HAP-1 (cell line): ENCODE measurements at regions of chr7 and their contacts with region 1.

Region 1: DNA sequence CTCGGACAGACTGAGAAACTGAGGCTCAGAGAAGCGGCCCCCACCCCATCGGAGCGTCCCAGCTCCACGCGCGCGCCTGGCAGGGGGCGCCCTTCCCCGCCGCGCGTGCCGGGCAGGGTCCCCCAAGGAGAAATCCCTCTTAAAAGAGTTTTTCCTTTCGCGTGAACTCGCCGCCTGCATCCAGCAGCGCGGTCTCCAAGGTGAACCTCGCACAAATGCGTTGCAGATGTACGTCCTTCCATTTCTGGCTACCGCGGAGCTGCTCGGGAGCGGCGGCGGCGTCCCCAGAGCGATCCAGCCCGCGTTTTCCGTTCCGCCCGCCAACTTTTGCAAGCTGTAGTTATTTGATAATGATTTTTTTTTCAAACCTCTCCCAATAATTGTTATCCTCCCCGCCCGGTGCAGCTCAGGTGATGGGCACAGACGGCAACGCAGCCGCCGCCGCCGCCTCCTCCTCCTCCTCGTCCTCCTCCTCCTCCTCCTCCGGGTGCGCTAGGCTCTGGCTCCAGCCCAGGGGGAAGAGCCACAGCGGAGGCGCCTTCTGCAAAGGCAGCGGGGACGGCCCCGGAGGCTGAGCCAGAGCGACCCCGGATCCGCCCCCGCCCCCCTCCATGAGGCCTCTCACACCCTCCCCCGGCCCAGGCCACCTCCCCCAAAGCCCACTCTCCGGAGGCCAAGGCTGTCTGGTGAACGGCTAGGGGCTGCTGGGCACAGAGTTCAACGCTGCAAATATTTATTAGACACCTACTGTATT is 74.0 kb upstream of the CUX1 start:
- DNase-seq: peak; percentile 58 to 83
- H3K4me3 ChIP-seq: peak overlapping the region; percentile 46
- H3K4me1 ChIP-seq: peaks cover 3% of the 10 kb centered on the region; the same call in 1 of the 2 replicates
- H3K27me3 ChIP-seq: no peaks in the 10 kb centered on the region

Region 2: GRCh38 chr7:101814991-101815834 is 71.8 kb after region 1 on chr7:
- in situ Hi-C with region 1: loop called (anchors 5 kb)
- DNase-seq: peak; percentile 27 to 74
- H3K4me3 ChIP-seq: peak overlapping the region; percentile 65
- H3K4me1 ChIP-seq: peaks cover 41% of the 10 kb centered on the region
- H3K27me3 ChIP-seq: no peaks in the 10 kb centered on the region

Region 3: GRCh38 chr7:102248456-102249395 is 505.3 kb after region 1 on chr7:
- in situ Hi-C with region 1: no loop called
- DNase-seq: no peak
- H3K4me3 ChIP-seq: no peak overlapping the region
- H3K4me1 ChIP-seq: no peaks in the 10 kb centered on the region
- H3K27me3 ChIP-seq: no peaks in the 10 kb centered on the region